Posterior vena cava (tissue), 2 donors: ENCODE measurements at regions of chr16 and their contacts with region 1.

Region 1: GRCh38 chr16:75794426-75794825 is 68.1 kb upstream of the CPHXL start:
- DNase-seq: no peak

Region 2: DNA sequence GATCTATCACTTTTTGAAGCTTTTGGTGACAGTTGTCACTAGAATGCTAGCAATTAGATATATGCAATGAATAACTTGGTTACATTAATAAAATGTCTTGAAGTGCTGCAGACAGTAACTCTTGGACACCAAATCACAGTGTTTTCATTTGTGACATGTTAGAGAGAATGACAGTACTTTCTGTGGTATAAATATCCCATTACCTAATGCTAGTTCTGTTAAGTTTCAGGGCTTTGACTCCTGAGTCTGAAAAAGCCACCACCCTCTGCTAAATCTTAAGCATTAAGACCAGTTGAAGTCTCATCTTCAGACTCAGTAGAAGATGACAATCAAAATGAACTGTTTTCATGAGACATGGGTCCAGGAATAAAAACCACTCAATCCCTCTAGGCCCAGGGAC is 107.1 kb before region 1 on chr16:
- intact Hi-C with region 1: no loop called
- DNase-seq: no peak

Region 3: GRCh38 chr16:76428858-76429257 is 634.4 kb after region 1 on chr16:
- intact Hi-C with region 1: loop called in 1 of 2 experiments (anchors 10 kb)
- DNase-seq: no peak

Region 4: GRCh38 chr16:76653390-76654026 is 859.1 kb after region 1 on chr16:
- intact Hi-C with region 1: loop called in 1 of 2 experiments (anchors 10 kb)
- DNase-seq: no peak